Right ventricle myocardium inferior (tissue), 1 donor: ENCODE measurements at regions of chr2 and their contacts with region 1.

Region 1: GRCh38 chr2:183038341-183039300 is at the start of gene NCKAP1:
- DNase-seq: peak; percentile 94
- ATAC-seq: peak; percentile 97
- total RNA-seq, gene NCKAP1: 135 TPM

Region 2: GRCh38 chr2:183000846-183001245 is 37.8 kb before region 1 on chr2:
- intact Hi-C with region 1: loop called (anchors 5 kb)
- DNase-seq: no peak
- ATAC-seq: no peak

Region 3: DNA sequence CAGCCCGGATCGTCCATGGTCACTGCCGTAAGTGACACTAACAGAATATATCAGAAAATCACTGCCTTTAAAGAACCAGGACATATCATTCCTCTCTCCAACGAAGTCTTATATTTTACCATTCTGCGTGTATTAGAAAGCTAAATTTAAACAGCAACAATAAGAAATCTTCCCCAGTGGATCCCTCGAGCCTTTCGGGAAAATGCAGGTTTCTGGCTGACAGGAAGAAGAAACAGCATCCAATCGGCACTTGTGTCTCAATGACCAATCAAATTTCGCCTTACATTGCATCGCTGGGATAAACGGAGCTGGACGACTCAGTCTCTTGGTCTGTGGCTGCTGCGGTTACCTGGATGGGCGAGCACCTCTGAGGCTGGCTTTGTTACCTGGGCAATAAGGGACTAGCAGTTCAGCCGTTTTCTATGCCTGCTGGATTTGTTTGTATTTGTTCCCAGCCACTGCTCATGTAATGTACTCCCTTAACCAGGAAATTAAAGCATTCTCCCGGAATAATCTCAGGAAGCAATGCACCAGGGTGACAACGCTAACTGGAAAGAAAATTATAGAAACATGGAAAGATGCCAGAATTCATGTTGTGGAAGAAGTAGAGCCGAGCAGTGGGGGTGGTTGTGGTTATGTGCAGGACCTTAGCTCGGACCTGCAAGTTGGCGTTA is 40.0 kb after region 1 on chr2 and contains the start of gene DUSP19:
- intact Hi-C with region 1: loop called (anchors 2 kb)
- DNase-seq: no peak
- ATAC-seq: peak; percentile 94
- total RNA-seq, gene DUSP19: 12.1 TPM

Region 4: DNA sequence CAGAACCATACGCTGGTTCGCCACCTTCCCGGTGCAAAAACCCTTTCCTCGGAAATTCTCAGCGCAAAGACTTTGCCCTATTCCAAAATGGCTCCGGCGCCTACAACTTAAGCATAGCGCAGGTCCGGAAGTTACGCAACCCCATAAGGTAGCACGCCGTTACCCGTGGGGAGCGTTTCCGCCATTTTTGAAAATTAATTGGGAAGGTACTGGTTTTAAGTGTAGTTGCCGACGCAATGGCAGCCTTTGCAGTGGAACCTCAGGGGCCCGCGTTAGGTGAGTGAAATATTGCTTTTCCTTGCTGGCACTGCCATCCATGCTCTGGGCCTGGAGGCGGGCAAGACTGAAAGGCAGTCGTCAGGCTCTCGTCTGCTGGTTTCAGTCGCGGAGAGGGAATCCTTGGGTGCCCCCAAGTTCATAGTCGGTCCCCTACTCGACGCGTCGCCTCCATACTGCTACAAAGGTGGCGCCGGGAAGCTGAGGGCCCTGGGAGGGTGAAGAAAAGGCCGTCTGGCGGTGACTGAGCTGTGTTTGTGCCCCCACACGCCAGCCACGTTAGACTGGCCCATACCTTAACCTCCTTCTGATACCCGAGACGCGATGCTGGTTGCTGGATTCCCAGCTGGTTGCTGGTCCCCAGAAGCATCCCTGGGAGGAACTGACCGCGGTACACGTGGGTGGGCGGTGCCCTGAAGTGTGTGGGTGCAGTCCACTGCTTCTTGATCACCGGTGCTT is 85.8 kb after region 1 on chr2 and contains the start of gene NUP35:
- intact Hi-C with region 1: loop called (anchors 2 kb)
- DNase-seq: peak; percentile 89
- ATAC-seq: peak; percentile 97
- total RNA-seq, gene NUP35: 8.0 TPM